Endothelial cell of umbilical vein (primary cell): ENCODE measurements at regions of chr2 and their contacts with region 1.

Region 1: GRCh38 chr2:4354678-4355077 is 651.3 kb downstream of the DCDC2C start:
- DNase-seq: peak; percentile 69
- H3K4me3 ChIP-seq: no peak overlapping the region
- H3K27ac ChIP-seq: peak overlapping the region; percentile 70
- H3K4me1 ChIP-seq: peaks cover 25% of the 10 kb centered on the region
- H3K27me3 ChIP-seq: no peaks in the 10 kb centered on the region
- CTCF ChIP-seq: peak; percentile 66 to 79
- POLR2A ChIP-seq: no peak

Region 2: DNA sequence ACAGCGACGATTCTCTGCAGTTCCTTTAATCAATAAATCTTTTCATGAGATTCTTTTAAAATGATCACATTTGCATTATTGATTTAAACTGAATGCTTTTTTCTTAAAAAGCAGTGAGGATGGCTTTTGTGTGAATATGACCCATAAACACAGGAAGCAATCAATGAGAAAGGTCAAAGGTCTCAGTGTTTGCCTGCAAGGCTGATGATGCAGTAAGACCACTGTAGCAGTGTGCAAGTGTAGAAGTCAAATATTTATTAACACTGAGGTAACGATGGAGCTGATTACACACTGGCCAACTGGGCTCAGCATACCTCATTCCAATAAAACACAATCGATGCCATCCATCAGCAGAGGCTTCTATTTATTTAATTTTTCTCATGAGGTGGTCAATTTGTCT is 17.8 kb before region 1 on chr2:
- CTCF ChIA-PET with region 1: interaction called, 13 read pairs
- POLR2A ChIA-PET with region 1: no interaction called
- dilution Hi-C with region 1: no loop called
- intact Hi-C with region 1: no loop called
- DNase-seq: no peak
- H3K4me3 ChIP-seq: no peak overlapping the region
- H3K27ac ChIP-seq: no peak overlapping the region
- H3K4me1 ChIP-seq: peaks cover 15% of the 10 kb centered on the region
- H3K27me3 ChIP-seq: no peaks in the 10 kb centered on the region
- CTCF ChIP-seq: no peak
- POLR2A ChIP-seq: no peak

Region 3: GRCh38 chr2:4499316-4500030 is 144.8 kb after region 1 on chr2:
- CTCF ChIA-PET with region 1: interaction called, 13 read pairs
- POLR2A ChIA-PET with region 1: no interaction called
- dilution Hi-C with region 1: no loop called
- intact Hi-C with region 1: loop called (anchors 1 kb)
- DNase-seq: peak; percentile 50
- H3K4me3 ChIP-seq: no peak overlapping the region
- H3K27ac ChIP-seq: peak overlapping the region; percentile 31
- H3K4me1 ChIP-seq: peaks cover 27% of the 10 kb centered on the region
- H3K27me3 ChIP-seq: no peaks in the 10 kb centered on the region
- CTCF ChIP-seq: no peak
- POLR2A ChIP-seq: no peak

Region 4: GRCh38 chr2:4618141-4618540 is 263.5 kb after region 1 on chr2:
- CTCF ChIA-PET with region 1: no interaction called
- POLR2A ChIA-PET with region 1: no interaction called
- dilution Hi-C with region 1: no loop called
- intact Hi-C with region 1: no loop called
- DNase-seq: no peak
- H3K4me3 ChIP-seq: no peak overlapping the region
- H3K27ac ChIP-seq: no peak overlapping the region
- H3K4me1 ChIP-seq: no peaks in the 10 kb centered on the region
- H3K27me3 ChIP-seq: no peaks in the 10 kb centered on the region
- CTCF ChIP-seq: no peak
- POLR2A ChIP-seq: no peak

Region 5: GRCh38 chr2:4662161-4662779 is 307.6 kb after region 1 on chr2:
- CTCF ChIA-PET with region 1: no interaction called
- POLR2A ChIA-PET with region 1: no interaction called
- dilution Hi-C with region 1: no loop called
- intact Hi-C with region 1: loop called (anchors 1 kb)
- DNase-seq: peak; percentile 88
- H3K4me3 ChIP-seq: no peak overlapping the region
- H3K27ac ChIP-seq: peak overlapping the region; percentile 91
- H3K4me1 ChIP-seq: peaks cover 18% of the 10 kb centered on the region
- H3K27me3 ChIP-seq: no peaks in the 10 kb centered on the region
- CTCF ChIP-seq: no peak
- POLR2A ChIP-seq: no peak

Region 6: DNA sequence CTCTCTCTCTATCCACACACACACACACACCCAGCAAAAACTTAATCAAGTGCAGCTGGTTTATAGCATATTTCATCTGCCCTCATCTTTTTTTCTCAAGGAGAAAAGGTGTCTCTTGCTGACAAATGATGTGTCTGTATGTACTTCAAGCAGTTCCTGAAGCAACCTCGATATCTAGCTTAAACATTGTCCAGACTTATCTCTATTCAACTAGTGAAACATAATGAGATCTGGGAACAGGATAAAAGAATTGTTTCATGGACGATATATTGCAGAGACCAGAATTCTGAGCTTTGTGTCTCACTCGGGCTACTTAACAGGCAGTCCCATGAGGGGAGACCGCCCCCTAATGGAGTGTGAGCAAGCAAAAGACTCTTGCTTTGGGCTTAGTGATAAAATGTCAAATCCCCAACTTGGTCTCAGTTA is 408.3 kb after region 1 on chr2:
- CTCF ChIA-PET with region 1: interaction called, 7 read pairs
- POLR2A ChIA-PET with region 1: no interaction called
- dilution Hi-C with region 1: no loop called
- intact Hi-C with region 1: loop called (anchors 1 kb)
- DNase-seq: peak; percentile 58
- H3K4me3 ChIP-seq: no peak overlapping the region
- H3K27ac ChIP-seq: no peak overlapping the region
- H3K4me1 ChIP-seq: no peaks in the 10 kb centered on the region
- H3K27me3 ChIP-seq: no peaks in the 10 kb centered on the region
- CTCF ChIP-seq: peak; percentile 56
- POLR2A ChIP-seq: no peak

Region 7: GRCh38 chr2:4992226-4992625 is 637.5 kb after region 1 on chr2:
- CTCF ChIA-PET with region 1: no interaction called
- POLR2A ChIA-PET with region 1: no interaction called
- dilution Hi-C with region 1: no loop called
- intact Hi-C with region 1: no loop called
- DNase-seq: no peak
- H3K4me3 ChIP-seq: no peak overlapping the region
- H3K27ac ChIP-seq: no peak overlapping the region
- H3K4me1 ChIP-seq: no peaks in the 10 kb centered on the region
- H3K27me3 ChIP-seq: no peaks in the 10 kb centered on the region
- CTCF ChIP-seq: no peak
- POLR2A ChIP-seq: no peak